A549 (cell line): ENCODE measurements at regions of chr20 and their contacts with region 1.

Region 1: DNA sequence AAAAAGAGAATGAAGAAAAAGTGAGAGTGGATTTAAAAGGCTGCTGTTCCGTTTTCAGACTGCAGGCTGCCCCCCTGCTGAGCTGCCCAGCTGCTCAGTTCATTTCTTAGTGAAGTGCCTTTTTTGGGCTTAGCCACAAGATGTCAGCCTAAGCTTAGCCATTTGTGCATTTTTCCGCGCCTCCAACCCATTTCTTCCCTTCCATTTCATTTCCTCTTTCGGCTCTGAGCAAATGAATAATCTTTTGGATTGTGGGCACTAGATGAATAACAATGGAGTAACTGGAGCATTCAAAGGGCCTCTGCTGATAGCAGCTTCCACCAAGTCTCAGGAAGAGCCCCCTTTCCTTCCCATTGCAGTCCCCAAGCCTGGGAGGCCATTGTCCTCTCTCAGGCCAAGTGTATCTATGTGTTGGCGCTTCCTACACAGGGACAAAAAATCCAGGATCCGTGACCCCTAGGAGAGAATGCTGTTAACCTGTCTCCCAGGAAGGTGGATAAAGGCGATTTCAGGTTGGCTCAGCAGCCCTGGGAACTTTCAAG is 83.5 kb upstream of the SPTLC3 start:
- DNase-seq: peak; percentile 81 to 88
- ATAC-seq: peak; percentile 85 to 93
- H3K4me3 ChIP-seq: no peak overlapping the region
- H3K27ac ChIP-seq: peak overlapping the region; percentile 19 to 52; a peak in 2 of 6 replicates
- H3K4me1 ChIP-seq: peaks cover 29% of the 10 kb centered on the region
- CTCF ChIP-seq: peak; percentile 99
- EP300 ChIP-seq: no peak
- POLR2A ChIP-seq: no peak
- RAD21 ChIP-seq: peak; percentile 99

Region 2: DNA sequence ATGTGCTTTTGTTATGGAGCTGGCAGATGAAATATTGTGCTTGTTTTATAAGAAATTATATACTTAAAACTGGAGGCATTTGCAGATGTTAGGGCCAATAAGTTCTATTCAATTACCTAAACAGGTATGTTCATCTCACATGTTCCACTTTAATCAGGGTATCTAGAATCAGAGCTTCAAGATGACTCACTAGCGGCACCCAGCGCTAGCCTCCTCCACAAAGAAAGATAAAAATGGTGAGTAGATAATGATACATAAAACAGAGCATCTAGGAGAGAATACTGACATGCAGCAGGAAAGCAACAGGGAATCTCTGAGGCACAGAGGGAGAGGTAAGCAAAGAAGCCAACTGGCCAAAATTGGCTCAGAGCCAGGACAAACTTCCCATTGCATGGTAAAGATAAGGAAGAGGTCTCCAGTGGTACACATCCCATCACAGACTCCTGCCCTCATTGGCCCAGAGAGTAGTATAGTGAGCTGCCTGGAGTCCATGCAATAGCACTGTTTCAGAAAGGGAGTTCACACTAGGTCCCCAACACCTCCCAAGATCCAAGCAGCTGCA is 117.2 kb before region 1 on chr20:
- CTCF ChIA-PET with region 1: no interaction called
- POLR2A ChIA-PET with region 1: no interaction called
- DNase-seq: no peak
- ATAC-seq: no peak
- H3K4me3 ChIP-seq: no peak overlapping the region
- H3K27ac ChIP-seq: no peak overlapping the region
- H3K4me1 ChIP-seq: no peaks in the 10 kb centered on the region
- CTCF ChIP-seq: no peak
- EP300 ChIP-seq: no peak
- POLR2A ChIP-seq: no peak
- RAD21 ChIP-seq: no peak

Region 3: DNA sequence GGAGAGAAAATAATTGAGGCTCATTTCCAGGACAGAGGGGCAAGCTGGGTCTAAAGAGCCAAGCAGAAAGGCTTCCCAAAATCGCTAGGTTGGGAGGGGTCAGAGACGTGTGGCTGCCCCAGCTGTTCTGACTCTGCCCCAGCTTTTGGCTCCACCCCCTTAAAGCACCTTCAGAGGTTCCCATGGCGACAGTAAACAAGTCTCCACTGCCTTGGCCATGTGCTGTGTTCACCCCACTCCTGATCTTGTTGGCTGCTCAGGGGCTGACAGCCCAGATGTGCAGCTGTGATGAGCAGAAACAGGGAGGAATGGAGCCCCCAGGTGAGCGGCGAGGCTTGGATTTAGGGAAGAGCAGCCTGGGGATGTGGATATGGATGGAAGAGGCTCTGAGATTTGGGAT is 10.8 kb after region 1 on chr20:
- CTCF ChIA-PET with region 1: interaction called, 37 read pairs
- POLR2A ChIA-PET with region 1: no interaction called
- DNase-seq: peak in 1 of 2 experiments; percentile 25
- ATAC-seq: peak; percentile 67 to 74; a peak in 5 of 6 replicates
- H3K4me3 ChIP-seq: no peak overlapping the region
- H3K27ac ChIP-seq: peak overlapping the region; percentile 41 to 72
- H3K4me1 ChIP-seq: peaks cover 22% of the 10 kb centered on the region
- CTCF ChIP-seq: no peak
- EP300 ChIP-seq: no peak
- POLR2A ChIP-seq: no peak
- RAD21 ChIP-seq: no peak

Region 4: DNA sequence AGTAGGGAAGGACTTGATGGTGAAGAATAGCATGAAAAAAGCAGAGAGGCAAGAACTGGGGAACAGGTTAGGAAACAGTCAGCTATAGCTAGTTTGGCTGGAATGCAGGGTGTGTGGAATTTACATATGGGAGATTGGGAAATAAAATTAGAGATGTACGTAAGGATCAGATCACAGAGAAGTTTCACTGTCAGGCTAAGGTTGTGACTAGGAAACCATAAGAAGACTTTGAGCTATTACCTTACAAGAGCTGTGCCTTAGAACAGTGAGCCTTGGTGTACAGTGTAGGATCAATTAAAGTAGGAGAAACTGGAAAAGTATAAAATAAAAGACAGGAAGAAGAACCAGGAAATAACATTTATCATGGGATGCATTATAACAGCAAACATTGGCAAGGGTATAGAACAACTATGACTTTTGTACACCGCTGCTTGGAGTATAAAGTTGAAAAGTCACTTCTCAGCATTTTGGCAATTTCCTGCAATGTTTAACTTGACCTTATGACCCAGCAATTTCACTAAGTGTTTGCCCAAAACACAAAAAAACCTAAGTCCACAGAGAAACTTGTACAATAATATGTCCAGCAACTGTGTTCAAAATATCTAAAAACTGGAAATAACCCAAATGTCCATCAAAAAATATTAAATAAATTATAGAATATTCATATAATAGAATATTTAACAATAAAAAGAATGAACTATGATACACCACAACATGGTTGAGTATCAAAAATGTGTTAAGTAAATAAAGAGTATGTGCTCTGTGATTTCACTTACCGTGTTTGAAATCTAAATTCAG is 52.2 kb after region 1 on chr20:
- CTCF ChIA-PET with region 1: interaction called, 604 read pairs
- POLR2A ChIA-PET with region 1: no interaction called
- DNase-seq: no peak
- ATAC-seq: peak in 1 of 2 experiments; percentile 24; a peak in 1 of 6 replicates
- H3K4me3 ChIP-seq: no peak overlapping the region
- H3K27ac ChIP-seq: peak overlapping the region in 1 of 2 experiments; percentile 22; a peak in 2 of 6 replicates
- H3K4me1 ChIP-seq: peaks cover 24% of the 10 kb centered on the region; the same call in 2 of the 3 replicates
- CTCF ChIP-seq: no peak
- EP300 ChIP-seq: no peak
- POLR2A ChIP-seq: no peak
- RAD21 ChIP-seq: no peak

Region 5: GRCh38 chr20:13111249-13111911 is 186.1 kb after region 1 on chr20:
- CTCF ChIA-PET with region 1: interaction called, 77 read pairs
- POLR2A ChIA-PET with region 1: no interaction called
- DNase-seq: no peak
- ATAC-seq: no peak
- H3K4me3 ChIP-seq: no peak overlapping the region
- H3K27ac ChIP-seq: no peak overlapping the region
- H3K4me1 ChIP-seq: no peaks in the 10 kb centered on the region
- CTCF ChIP-seq: no peak
- EP300 ChIP-seq: no peak
- POLR2A ChIP-seq: no peak
- RAD21 ChIP-seq: no peak

Region 6: DNA sequence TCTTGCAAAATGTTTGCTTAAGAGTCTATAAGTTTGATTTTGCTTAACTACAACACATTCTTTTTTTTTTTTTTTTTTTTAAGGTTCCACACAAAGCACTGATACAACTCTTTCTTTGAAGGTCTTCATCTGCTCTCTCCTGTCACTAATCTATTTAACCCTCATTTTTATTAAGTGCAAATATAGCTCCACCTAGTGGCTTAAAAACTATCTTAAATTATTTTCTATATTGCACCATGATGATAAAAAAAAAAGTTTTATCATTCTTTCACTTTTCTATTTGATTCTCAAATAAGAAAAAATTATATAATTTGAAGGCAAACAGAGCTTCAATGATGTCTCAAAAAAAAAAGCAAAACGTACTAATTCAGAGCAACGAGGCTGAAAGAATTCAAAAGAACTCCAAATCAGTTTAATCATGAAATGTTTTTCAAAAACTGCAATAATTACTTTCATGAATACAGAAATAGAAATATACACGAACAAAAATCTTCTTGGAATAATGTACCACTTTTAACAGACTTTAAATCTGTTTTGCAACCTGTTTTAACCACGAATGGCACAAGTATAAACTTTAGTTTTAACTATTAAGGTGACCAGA is 846.7 kb after region 1 on chr20:
- CTCF ChIA-PET with region 1: interaction called, 10 read pairs
- POLR2A ChIA-PET with region 1: no interaction called
- DNase-seq: peak; percentile 25 to 36
- ATAC-seq: peak in 1 of 2 experiments; percentile 61; a peak in 3 of 6 replicates
- H3K4me3 ChIP-seq: no peak overlapping the region
- H3K27ac ChIP-seq: no peak overlapping the region
- H3K4me1 ChIP-seq: no peaks in the 10 kb centered on the region
- CTCF ChIP-seq: peak; percentile 64; the same call in 2 of the 3 replicates
- EP300 ChIP-seq: no peak
- POLR2A ChIP-seq: no peak
- RAD21 ChIP-seq: peak; percentile 56 to 65